ENCODE measurements at regions of chr1 and their contacts with region 1.

Region 1: GRCh38 chr1:155001675-155002463 is 733 bp upstream of the ZBTB7B start:
- DNase-seq: peak; percentile 94
- ATAC-seq: peak; percentile 76
- H3K4me3 ChIP-seq: peak overlapping the region; percentile 98
- H3K27ac ChIP-seq: peak overlapping the region; percentile 79
- H3K4me1 ChIP-seq: peaks cover 39% of the 10 kb centered on the region
- H3K27me3 ChIP-seq: no peaks in the 10 kb centered on the region
- CTCF ChIP-seq: peak; percentile 37 to 53 (median 51); a peak in 5 of 6 replicates
- EP300 ChIP-seq: no peak
- POLR2A ChIP-seq: peak; percentile 1; the same call in 1 of the 2 replicates
- RAD21 ChIP-seq: peak; percentile 32; the same call in 1 of the 2 replicates

Region 2: GRCh38 chr1:154943649-154944400 is 58.0 kb before region 1 on chr1:
- CTCF ChIA-PET with region 1: interaction called, 16 read pairs
- POLR2A ChIA-PET with region 1: interaction called, 4 read pairs
- RAD21 ChIA-PET with region 1: interaction called, 6 read pairs
- SMC1A ChIA-PET with region 1: interaction called, 4 read pairs
- in situ Hi-C with region 1: no loop called
- intact Hi-C with region 1: no loop called
- DNase-seq: no peak
- ATAC-seq: peak; percentile 37
- H3K4me3 ChIP-seq: peak overlapping the region; percentile 77
- H3K27ac ChIP-seq: peak overlapping the region; percentile 100
- H3K4me1 ChIP-seq: peaks cover 63% of the 10 kb centered on the region
- H3K27me3 ChIP-seq: no peaks in the 10 kb centered on the region
- CTCF ChIP-seq: peak; percentile 88 to 90 (median 89)
- EP300 ChIP-seq: no peak
- POLR2A ChIP-seq: no peak
- RAD21 ChIP-seq: peak; percentile 71

Region 3: DNA sequence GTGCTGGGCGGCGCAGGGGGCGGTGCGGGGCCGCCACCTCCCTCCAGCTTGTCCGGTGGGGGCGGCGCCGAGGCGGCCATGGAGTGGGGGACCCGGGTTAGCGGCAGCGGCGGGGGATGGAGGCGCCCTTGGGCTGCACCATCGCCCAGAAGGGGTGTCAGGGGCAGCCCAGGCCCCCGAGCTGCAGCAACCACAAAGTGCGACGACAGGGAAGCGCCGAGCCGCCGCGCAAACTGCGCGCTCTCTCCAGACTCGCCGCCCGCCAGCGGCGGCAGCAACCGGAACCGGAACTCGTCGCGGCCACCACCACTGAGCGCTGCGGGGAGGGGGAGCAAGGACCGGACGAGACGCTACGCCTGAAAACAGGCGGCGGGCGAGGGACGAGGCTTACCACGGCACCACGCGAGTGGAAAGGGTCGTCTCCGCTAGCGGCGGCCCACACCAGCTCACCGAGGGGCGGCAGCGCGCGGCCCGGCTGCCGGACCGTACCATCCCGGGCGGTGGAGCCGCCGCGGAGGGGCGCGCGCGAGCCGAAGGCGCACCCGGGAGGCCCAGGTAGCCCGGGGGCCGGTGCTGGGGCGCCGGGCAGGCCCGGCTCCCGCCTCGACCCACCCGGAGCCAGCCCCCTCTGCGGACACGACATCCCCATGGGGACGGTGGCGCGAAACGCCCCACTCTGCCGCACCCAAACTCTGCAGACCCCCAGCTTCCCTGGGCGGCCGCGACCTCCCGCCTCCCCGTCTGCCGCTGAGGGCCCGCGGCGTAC is 40.2 kb before region 1 on chr1 and contains the start of gene PYGO2:
- CTCF ChIA-PET with region 1: interaction called, 20 read pairs
- POLR2A ChIA-PET with region 1: interaction called, 6 read pairs
- RAD21 ChIA-PET with region 1: interaction called, 9 read pairs
- SMC1A ChIA-PET with region 1: interaction called, 7 read pairs
- in situ Hi-C with region 1: no loop called
- intact Hi-C with region 1: loop called (anchors 5 kb)
- DNase-seq: no peak
- ATAC-seq: peak; percentile 94
- H3K4me3 ChIP-seq: peak within 1 kb of the TSS; percentile 88
- H3K27ac ChIP-seq: peak within 1 kb of the TSS; percentile 97
- H3K4me1 ChIP-seq: peaks cover 7% of the 10 kb centered on the region
- H3K27me3 ChIP-seq: no peaks in the 10 kb centered on the region
- CTCF ChIP-seq: peak; percentile 44 to 73 (median 52); a peak in 5 of 6 replicates
- EP300 ChIP-seq: no peak
- POLR2A ChIP-seq: peak; percentile 95
- RAD21 ChIP-seq: peak; percentile 38
- polyA plus RNA-seq, gene PYGO2: 8.1 to 8.3 TPM

Region 4: DNA sequence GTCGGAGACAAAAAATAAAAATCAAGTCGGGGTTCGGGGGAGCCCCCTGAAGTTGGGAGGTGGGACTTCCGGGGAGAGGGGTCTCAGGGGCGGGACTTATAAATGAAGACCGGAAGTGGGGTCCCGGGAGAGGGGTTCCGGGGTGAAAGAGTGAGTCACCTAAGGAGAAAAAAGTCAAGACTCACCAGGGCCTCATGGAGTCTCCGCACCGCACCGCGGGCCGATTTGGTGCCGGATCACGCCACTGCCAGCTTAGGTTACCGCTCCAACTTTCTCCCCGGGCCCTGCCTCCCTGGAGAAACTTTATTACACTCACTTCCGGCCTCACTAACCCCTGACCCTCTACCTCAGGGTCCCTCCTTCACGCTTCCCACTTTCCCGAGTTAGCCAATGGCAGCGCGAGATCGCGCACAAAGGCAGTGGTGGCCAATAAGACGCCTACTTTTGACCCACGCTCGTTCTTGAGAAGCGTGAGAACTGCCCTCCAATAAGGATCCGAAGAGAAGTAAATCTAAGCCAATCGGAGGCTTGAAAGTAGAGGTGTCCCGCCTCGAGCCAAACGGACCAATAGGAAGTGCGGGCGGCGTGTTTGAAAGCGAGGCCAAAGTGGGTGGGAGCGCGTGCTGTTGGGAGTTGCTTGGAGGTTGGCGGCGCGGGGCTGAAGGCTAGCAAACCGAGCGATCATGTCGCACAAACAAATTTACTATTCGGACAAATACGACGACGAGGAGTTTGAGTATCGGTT is 27.6 kb before region 1 on chr1 and contains the start of gene CKS1B:
- CTCF ChIA-PET with region 1: interaction called, 226 read pairs
- POLR2A ChIA-PET with region 1: interaction called, 36 read pairs
- RAD21 ChIA-PET with region 1: interaction called, 20 read pairs
- SMC1A ChIA-PET with region 1: interaction called, 30 read pairs
- in situ Hi-C with region 1: no loop called
- intact Hi-C with region 1: loop called (anchors 1 kb)
- DNase-seq: peak; percentile 100
- ATAC-seq: peak; percentile 87
- H3K4me3 ChIP-seq: peak within 1 kb of the TSS; percentile 90
- H3K27ac ChIP-seq: peak within 1 kb of the TSS; percentile 96
- H3K4me1 ChIP-seq: peaks cover 28% of the 10 kb centered on the region
- H3K27me3 ChIP-seq: no peaks in the 10 kb centered on the region
- CTCF ChIP-seq: no peak
- EP300 ChIP-seq: no peak
- POLR2A ChIP-seq: peak; percentile 85
- RAD21 ChIP-seq: no peak
- polyA plus RNA-seq, gene CKS1B: 598 to 608 TPM

Region 5: DNA sequence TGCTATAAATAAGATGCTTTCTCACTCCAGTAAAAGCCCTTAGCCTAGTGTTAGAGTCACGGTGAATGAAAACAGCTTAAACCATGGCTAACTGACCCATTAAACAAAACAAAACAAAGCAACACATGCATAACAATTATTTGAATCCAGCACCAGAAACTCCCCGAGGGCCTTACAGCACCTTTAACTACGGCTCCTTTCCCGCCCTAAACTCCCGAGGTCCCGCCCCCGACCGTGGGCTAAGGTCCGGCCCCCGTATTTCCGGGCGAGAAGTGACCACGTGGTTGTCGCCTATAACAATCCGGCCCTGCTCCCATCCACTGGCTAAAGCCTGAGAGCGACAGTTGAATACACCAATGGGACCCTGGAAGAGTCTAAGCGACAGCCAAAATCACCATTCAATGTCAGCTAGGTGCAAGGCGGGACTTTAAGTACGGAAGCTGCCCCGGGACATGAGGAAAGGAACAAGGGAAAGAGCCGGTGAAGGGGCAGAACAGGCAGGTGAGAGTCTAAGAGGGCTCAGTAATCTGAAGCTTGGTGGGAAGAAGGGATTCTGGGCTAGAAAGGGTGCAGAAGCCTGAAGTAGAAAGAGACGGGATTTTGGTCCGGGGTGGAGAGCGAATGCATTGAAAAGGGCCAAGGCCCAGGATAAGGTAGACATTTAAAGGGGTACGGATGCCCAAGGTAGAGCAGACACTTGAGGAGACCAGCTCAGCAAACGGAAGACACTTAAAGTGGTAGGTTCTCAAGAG is 18.8 kb before region 1 on chr1 and contains the start of gene FLAD1:
- CTCF ChIA-PET with region 1: interaction called, 226 read pairs
- POLR2A ChIA-PET with region 1: interaction called, 17 read pairs
- RAD21 ChIA-PET with region 1: interaction called, 24 read pairs
- SMC1A ChIA-PET with region 1: interaction called, 69 read pairs
- in situ Hi-C with region 1: no loop called
- intact Hi-C with region 1: loop called (anchors 2 kb)
- DNase-seq: peak; percentile 100
- ATAC-seq: peak; percentile 100
- H3K4me3 ChIP-seq: peak within 1 kb of the TSS; percentile 96
- H3K27ac ChIP-seq: peak within 1 kb of the TSS; percentile 79
- H3K4me1 ChIP-seq: peaks cover 6% of the 10 kb centered on the region
- H3K27me3 ChIP-seq: no peaks in the 10 kb centered on the region
- CTCF ChIP-seq: no peak
- EP300 ChIP-seq: no peak
- POLR2A ChIP-seq: peak; percentile 66
- RAD21 ChIP-seq: no peak
- polyA plus RNA-seq, gene FLAD1: 22.9 to 30.1 TPM

Region 6: DNA sequence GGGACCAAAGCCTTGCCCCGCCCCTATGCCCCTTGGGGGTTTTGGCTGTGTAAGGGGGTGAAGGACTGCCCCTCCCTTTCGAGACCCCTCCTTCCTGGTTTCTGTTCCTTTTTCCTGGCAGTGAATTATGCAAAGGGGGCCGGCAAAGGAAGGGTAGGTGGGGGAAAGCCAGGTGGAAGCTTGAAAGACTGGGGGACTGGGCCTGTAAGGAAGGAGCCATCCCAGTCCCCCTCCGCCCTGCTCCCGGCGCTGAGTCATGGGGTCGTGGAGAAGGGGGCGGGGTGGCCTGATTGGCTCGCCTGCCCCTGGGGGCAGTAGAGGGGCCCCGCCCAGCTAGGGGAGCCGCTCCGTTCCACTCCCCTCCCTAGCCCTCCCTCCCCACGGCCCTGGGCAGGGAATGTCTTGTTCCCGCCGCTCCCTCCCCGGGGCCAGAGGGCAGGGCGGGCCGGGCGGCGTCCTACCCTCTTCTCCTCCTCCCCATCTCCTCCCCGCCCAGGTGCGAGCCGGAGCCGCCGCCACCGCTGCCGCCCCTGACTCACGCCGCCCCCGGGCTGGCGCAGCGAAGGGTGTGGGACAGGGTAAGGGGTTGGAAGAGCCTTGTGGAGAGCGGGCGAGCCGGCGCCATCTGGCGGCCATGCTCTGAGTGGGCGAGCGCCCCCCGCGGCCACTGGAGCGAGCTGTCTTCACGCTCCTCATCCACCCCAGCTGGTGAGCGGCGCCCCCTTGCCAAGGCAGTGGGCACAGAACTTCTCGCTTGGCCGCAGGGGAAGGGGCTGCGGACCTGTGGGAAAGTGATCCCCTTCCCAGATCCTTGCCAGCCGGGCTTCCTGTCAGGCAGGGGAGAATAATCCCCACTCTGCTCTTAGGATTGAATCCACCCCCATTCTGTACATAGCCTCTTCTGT is 15.4 kb after region 1 on chr1:
- CTCF ChIA-PET with region 1: interaction called, 42 read pairs
- POLR2A ChIA-PET with region 1: interaction called, 10 read pairs
- RAD21 ChIA-PET with region 1: interaction called, 14 read pairs
- SMC1A ChIA-PET with region 1: interaction called, 14 read pairs
- in situ Hi-C with region 1: no loop called
- intact Hi-C with region 1: loop called (anchors 2 kb)
- DNase-seq: peak; percentile 47
- ATAC-seq: peak; percentile 98
- H3K4me3 ChIP-seq: peak overlapping the region; percentile 65
- H3K27ac ChIP-seq: peak overlapping the region; percentile 75
- H3K4me1 ChIP-seq: peaks cover 23% of the 10 kb centered on the region
- H3K27me3 ChIP-seq: no peaks in the 10 kb centered on the region
- CTCF ChIP-seq: peak; percentile 99 to 100 (median 100); a peak in 5 of 6 replicates
- EP300 ChIP-seq: 0 out of 4 replicates have a peak, but pooled peaks of 1 of the 2 experiments have one; percentile 26
- POLR2A ChIP-seq: peak; percentile 69
- RAD21 ChIP-seq: peak; percentile 64

Measured in GM12878 (cell line).